Cardiac septum (tissue), 1 donor: ENCODE measurements at regions of chr1 and their contacts with region 1.

Region 1: GRCh38 chr1:194069168-194069830 is 882.9 kb upstream of the B3GALT2 start:
- DNase-seq: peak; percentile 86

Region 2: GRCh38 chr1:193368302-193368701 is 701.0 kb before region 1 on chr1:
- intact Hi-C with region 1: no loop called
- DNase-seq: no peak

Region 3: DNA sequence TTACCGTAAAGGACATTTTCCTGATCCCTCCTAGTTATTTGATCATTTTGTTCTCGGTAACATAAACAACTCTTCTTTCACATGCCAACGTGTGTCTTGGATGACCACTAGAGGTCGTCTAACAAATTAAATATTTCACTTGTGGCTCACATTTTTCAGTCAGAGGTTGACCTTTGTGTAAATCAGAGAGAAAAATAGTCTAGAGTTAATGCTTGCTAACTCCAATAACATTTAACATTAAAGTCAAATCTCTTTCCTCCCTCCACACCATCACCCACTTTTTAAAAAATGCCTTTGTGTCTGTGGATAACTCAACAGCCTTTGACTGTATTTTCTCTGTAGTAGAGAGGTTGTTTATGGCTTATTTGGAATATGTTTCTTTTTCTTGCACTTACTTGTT is 662.4 kb before region 1 on chr1:
- intact Hi-C with region 1: loop called (anchors 5 kb)
- DNase-seq: no peak

Region 4: GRCh38 chr1:193589597-193590040 is 479.7 kb before region 1 on chr1:
- intact Hi-C with region 1: loop called (anchors 5 kb)
- DNase-seq: no peak

Region 5: DNA sequence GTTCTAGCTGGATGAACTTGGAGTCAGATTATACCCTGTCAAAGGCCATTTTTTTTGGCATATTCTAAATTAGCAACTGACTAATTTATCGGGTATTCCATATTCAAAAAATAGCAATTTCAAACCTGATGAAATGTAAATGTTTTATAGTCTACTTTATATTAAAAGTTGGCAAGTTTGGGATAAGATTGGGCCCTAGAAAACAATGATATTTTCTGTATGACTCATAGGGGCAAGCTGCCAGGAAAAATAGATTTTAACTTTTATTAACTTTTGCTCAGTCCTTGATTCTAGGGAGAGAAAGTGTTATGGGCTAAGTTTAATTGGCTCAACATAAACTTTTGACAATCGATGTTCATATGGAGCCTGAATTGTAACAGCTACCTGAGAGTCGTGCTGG is 306.0 kb before region 1 on chr1:
- intact Hi-C with region 1: loop called (anchors 10 kb)
- DNase-seq: no peak

Region 6: DNA sequence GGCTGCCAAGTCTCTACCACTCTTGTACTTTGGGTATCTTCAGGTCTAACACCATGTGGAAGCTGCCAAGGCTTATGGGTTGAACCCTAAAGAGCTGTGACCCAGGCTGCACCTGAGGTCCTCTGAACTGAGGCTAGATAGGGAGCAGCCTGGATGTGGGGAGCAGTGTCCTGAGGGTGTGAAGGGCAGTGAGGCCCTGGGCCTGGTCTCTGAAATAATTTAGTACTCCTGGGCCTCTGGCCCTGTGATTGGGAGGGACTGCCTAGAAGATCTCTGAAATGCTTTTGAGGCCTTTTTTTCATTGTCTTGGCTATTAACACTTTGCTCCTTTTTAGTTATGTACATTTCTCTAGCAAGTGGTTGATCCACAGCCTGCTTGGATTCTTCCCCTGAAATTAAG is 35.7 kb before region 1 on chr1:
- intact Hi-C with region 1: no loop called
- DNase-seq: no peak

Region 7: GRCh38 chr1:194485432-194485831 is 416.1 kb after region 1 on chr1:
- intact Hi-C with region 1: no loop called
- DNase-seq: no peak